ENCODE measurements at regions of chr16 and their contacts with region 1.

Region 1: GRCh38 chr16:27972500-27972899 is 91.0 kb downstream of the GSG1L start:
- DNase-seq: no peak
- ATAC-seq: peak; percentile 77
- H3K4me3 Mint-ChIP-seq: no peak overlapping the region
- H3K27ac Mint-ChIP-seq: no peak overlapping the region
- H3K4me1 Mint-ChIP-seq: no peaks in the 10 kb centered on the region
- H3K27me3 Mint-ChIP-seq: peaks cover 6% of the 10 kb centered on the region
- CTCF ChIP-seq: no peak

Region 2: GRCh38 chr16:28069971-28070794 is 97.7 kb after region 1 on chr16:
- CTCF ChIA-PET with region 1: interaction called, 11 read pairs
- POLR2A ChIA-PET with region 1: no interaction called
- intact Hi-C with region 1: no loop called
- DNase-seq: no peak
- ATAC-seq: no peak
- H3K4me3 Mint-ChIP-seq: no peak overlapping the region
- H3K27ac Mint-ChIP-seq: no peak overlapping the region
- H3K4me1 Mint-ChIP-seq: no peaks in the 10 kb centered on the region
- H3K27me3 Mint-ChIP-seq: peaks cover 16% of the 10 kb centered on the region
- CTCF ChIP-seq: no peak

Region 3: DNA sequence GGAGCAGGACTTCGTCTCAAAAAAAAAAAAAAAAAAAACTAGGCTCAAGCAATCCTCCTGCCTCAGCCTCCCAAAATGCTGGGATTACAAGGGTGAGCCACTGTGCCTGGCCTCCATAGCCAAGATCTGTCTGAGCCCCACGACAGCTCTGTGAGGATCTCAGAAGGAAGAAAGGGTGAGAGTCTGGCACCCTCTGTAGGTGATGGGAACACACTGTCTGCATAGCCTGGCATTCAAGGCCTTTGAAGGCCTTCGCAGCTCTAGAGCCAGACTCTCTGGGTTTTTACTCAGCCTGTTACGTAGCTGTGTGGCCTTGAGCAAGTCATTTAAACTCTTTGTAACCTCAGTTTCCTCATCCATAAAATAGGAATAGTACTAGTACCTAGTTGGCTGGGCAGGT is 245.6 kb after region 1 on chr16:
- CTCF ChIA-PET with region 1: interaction called, 45 read pairs
- POLR2A ChIA-PET with region 1: interaction called, 4 read pairs
- intact Hi-C with region 1: no loop called
- DNase-seq: no peak
- ATAC-seq: peak; percentile 99
- H3K4me3 Mint-ChIP-seq: no peak overlapping the region
- H3K27ac Mint-ChIP-seq: no peak overlapping the region
- H3K4me1 Mint-ChIP-seq: peaks cover 2% of the 10 kb centered on the region
- H3K27me3 Mint-ChIP-seq: no peaks in the 10 kb centered on the region
- CTCF ChIP-seq: no peak

Region 4: DNA sequence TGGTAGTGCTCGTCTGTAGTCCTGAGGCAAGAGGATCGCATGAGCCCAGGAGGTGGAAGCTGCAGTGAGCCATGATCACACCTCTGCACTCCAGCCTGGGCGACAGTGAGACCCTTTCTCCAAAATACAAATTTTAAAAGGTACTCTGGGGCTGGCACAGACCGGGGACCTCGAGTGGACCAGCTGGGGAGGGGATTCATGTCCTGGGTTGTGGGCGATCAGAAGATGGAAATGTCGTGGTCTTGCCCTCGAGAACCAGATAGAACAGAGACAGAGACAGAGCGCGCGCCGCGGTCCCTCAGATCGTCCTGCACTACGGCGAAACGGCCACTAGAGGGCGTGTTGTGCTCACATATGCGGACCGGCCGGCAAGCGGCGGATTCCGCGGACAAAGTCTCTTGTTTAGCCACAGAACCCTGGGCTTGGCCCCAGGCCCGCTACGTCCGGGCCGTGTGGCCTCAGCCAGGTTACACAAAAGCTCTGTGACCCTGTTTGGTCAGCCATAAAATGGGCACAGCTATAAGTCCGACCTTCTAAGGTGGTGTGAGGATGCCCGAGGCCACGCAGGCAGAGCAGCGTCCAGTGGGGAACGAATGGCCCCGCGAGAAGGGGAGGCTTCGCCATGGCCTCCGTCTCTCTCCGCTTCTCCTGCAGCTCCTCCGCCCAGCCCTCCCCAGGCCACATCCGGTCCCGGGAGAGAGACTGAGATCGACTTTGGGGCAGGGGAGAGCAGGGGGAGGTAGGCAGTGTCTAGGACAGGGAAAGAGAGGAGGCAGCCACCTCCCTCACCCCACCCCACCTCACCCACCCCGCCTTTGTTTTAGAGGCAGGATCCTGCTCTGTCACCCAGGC is 305.3 kb after region 1 on chr16:
- CTCF ChIA-PET with region 1: no interaction called
- POLR2A ChIA-PET with region 1: no interaction called
- intact Hi-C with region 1: loop called (anchors 2 kb)
- DNase-seq: peak; percentile 78
- ATAC-seq: peak; percentile 97
- H3K4me3 Mint-ChIP-seq: peak overlapping the region; percentile 55
- H3K27ac Mint-ChIP-seq: no peak overlapping the region
- H3K4me1 Mint-ChIP-seq: peaks cover 8% of the 10 kb centered on the region
- H3K27me3 Mint-ChIP-seq: peaks cover 33% of the 10 kb centered on the region
- CTCF ChIP-seq: peak; percentile 87

Region 5: DNA sequence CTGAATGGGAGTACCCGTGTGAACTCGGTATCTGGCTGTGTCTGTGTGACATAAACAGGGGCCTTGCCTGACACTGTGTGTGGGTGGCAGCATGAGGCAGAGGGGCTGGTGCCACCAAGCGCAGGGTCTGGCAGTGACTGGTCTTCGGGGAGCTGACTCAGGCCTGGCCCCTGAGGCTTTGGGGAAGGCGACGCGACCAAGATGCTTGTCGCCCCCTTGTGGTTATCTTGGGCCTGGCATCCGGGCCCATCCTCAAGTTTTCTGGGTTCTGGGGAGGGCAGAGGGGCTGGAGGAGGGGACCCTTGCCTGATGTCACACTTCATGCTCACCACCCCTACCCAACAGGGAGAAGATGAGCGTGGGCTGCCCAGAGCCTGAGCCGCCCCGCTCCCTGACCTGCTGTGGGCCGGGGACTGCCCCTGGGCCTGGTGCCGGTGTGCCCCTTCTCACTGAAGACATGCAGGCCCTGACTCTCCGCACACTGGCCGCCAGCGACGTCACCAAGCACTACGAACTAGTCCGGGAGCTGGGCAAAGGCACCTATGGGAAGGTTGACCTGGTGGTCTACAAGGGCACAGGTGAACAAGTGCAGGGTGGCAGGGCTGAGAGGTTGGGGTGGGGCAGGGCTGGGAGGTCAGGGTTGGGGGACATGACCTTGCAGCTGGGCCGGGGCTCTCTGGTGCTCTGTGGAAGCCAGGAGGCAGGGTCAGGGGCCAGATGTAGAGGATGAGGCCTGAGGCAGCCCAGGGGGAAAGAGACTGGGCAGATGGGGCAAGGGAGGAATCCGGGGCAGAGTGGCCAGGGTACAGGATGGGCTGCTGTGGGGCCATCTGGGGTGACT is 344.8 kb after region 1 on chr16:
- CTCF ChIA-PET with region 1: no interaction called
- POLR2A ChIA-PET with region 1: no interaction called
- intact Hi-C with region 1: loop called (anchors 5 kb)
- DNase-seq: peak; percentile 64
- ATAC-seq: peak; percentile 81
- H3K4me3 Mint-ChIP-seq: no peak overlapping the region
- H3K27ac Mint-ChIP-seq: peak overlapping the region; percentile 41
- H3K4me1 Mint-ChIP-seq: peaks cover 3% of the 10 kb centered on the region
- H3K27me3 Mint-ChIP-seq: no peaks in the 10 kb centered on the region
- CTCF ChIP-seq: peak; percentile 42

Measured in activated B cell treated with CpG ODN at 0.5 μM for 24 hours (primary cell).